Lower leg skin (tissue), 4 donors: ENCODE measurements at regions of chr11 and their contacts with region 1.

Region 1: DNA sequence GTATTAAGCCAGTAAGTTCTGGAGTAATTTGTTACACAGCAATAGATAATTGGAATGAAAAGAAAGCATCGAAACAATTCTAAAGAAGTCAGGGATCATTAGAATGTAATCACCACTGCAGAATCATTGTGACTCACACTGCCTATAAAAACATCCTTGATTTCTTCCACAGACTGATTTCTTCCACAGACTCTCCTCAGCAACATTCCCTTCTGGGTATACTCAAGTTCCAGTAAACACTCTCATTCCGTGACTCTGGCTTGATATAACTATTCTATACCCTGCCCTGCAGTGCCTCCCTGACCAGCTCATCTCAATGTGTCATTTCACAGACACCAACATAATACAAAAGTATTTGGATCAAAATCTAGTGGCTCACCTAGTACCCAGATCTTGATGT is 120.5 kb downstream of the BBOX1 start:
- DNase-seq: no peak
- H3K4me3 ChIP-seq: no peak overlapping the region
- CTCF ChIP-seq: no peak
- POLR2A ChIP-seq: no peak

Region 2: DNA sequence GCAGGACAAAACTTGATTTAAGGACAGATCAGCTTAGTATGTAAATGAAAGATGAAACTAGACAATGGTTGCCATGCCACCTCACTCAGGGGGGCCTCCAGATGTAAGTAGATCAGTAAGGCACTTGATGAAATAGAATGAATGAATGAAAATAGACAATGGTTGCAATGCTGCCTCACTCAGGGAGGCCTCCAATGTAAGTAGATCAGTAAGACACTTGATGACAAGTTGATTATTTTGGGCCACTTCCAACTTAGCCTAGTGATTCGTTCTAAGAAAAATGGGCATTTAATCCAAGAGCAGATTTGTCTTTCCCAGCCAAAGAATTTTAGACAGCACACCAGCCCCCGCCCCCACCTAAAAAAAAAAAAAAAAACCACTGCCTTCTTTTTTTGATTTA is 420.0 kb before region 1 on chr11:
- intact Hi-C with region 1: loop called (anchors 10 kb)
- DNase-seq: no peak
- H3K4me3 ChIP-seq: no peak overlapping the region
- CTCF ChIP-seq: no peak
- POLR2A ChIP-seq: no peak